Sciatic nerve (tissue), 2 donors: ENCODE measurements at regions of chr1 and their contacts with region 1.

Region 1: GRCh38 chr1:22641906-22642636 is 1.4 kb upstream of the C1QC start:
- DNase-seq: peak; percentile 92
- ATAC-seq: peak; percentile 90

Region 2: DNA sequence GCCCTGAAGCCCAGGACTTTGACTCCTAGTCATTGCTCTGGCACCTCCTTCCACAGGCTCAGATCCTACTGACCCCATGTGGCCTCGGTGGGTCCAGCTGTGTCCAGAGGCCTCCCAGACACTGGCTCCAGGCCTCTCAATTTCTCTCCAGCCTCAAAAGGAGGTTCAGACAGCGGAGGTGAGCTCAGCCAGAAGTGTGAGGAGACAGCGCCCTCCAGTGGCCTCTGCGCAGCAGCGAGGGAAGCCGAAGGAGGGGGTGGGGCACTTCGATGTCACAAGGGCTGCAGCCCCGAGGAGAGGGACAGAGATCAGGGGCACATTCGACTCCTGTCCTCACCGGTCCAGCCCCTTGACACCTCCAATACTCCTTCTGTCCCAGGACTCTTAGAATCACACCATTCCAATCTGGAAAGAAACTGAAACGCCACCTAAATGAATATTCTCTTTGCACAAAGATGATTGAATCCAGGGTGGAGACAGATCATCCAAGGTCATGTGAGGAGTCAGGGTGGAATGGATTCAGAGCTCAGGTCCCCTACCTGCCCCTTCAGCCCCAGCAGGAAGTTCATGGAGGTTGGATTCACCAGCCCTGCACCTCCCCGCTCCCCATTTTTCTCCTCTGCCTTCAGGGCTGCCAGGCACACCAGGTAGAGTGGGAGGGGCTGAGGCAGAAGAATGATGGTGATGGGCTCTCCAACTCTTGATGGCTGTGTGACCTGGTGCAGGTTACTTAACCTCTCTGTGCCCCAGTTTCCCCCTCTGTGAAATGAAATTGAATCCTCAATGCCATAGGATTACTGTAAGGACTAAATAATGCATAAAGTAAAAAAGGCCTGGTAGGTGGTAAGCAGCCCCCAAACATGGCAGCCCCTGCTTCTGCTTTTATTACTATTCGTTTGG is 225.3 kb before region 1 on chr1:
- intact Hi-C with region 1: loop called (anchors 5 kb)
- DNase-seq: peak; percentile 76
- ATAC-seq: peak; percentile 66

Region 3: DNA sequence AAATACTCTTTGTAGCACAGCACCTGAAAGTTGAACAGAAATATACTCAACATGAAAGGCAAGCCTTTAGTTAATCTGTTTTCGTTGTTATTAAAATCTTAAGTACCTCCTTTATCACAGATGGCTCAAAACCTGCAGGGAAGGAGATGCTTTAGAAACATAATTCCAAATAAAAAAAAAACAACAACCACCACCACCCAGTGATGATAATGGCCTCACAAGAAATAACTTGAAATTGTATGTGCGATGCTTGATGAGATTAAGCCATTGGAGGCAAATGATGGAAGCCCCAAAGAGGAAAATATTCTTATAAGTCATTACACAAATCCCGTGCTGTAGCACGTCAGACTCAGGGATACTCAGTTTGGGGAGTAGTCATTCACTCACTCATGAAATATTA is 215.3 kb before region 1 on chr1:
- intact Hi-C with region 1: loop called (anchors 5 kb)
- DNase-seq: no peak
- ATAC-seq: no peak

Region 4: GRCh38 chr1:22600071-22600816 is 41.8 kb before region 1 on chr1:
- intact Hi-C with region 1: no loop called
- DNase-seq: no peak
- ATAC-seq: no peak